RWPE1 (cell line): ENCODE measurements at regions of chr1 and their contacts with region 1.

Region 1: DNA sequence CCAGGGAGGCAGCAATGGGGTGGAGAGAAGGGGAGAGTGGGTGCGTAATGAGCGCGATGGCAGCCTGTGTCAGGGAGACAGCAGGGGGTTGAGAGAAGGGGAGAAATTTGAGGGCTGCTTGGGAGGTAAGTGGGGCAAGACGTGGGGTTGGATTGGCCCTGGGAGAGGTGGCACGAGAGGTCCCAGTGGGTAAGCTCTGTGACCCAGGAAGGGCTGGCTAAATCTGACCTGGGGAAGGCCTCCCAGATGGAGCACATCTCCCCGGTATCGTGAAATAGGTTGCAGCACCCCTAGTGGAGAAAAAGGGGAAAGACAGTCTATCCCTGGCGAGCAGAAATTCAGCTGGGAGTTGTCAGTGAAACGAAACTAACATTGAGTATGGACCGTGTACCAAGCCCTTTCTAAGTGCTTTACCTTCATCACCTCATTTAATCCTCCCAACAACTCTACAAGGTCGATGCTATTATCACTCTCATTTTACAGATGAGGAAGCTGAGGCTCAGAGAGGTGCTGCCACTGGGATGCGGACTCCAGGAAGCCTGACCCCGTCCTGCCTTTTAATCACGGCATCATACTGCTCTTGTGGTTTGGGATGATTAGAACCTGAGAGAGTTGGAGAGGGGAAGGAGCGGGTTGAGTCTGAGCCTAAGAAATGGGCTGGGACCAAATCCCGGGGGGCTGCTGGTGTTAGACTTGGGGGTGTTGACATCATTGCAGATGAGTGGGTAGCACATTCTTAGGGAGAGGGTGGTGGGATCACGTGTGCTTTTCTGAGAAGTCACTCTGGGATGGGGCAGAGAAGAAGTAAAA is 56.6 kb upstream of the RPL11 start:
- DNase-seq: peak; percentile 88
- H3K27ac ChIP-seq: peak overlapping the region; percentile 35
- CTCF ChIP-seq: peak; percentile 89

Region 2: DNA sequence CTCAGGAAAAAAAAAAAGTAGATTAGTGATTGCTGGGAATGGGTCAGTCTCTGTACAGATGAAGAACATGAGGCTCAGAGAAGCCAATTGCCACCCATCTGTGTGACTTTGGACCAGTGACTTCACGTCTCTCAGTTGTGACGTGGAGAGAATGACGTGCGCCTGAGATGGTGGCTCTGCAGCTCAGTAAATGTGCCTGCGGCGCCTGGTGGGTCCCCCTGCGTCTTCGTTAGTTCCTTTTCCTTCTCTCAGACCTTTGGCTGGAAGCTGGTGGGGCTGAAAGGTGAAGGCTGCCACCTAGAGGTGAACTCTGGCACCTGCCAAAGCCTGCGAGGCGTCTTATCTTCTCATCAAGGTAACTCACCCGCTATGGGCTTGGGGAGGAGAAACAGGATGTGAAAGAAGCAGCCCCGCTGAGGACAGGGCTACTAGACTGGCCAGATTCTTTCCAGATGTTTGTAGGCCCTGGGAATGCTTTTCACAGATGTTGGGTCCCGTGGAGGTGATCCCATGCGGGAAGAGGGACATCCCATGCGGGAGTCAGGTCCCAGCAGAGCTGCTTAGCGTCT is 95.3 kb before region 1 on chr1:
- CTCF ChIA-PET with region 1: interaction called, 97 read pairs
- POLR2A ChIA-PET with region 1: no interaction called
- DNase-seq: peak; percentile 89
- H3K27ac ChIP-seq: no peak overlapping the region
- CTCF ChIP-seq: peak; percentile 95

Region 3: GRCh38 chr1:23559136-23559984 is 75.7 kb before region 1 on chr1 and contains the start of gene ID3:
- CTCF ChIA-PET with region 1: interaction called, 31 read pairs
- POLR2A ChIA-PET with region 1: interaction called, 7 read pairs
- DNase-seq: peak; percentile 89
- H3K27ac ChIP-seq: peak within 1 kb of the TSS; percentile 96
- CTCF ChIP-seq: no peak

Region 4: GRCh38 chr1:23591460-23592208 is 43.4 kb before region 1 on chr1:
- CTCF ChIA-PET with region 1: interaction called, 13 read pairs
- POLR2A ChIA-PET with region 1: no interaction called
- DNase-seq: no peak
- H3K27ac ChIP-seq: peak overlapping the region; percentile 95
- CTCF ChIP-seq: no peak

Region 5: DNA sequence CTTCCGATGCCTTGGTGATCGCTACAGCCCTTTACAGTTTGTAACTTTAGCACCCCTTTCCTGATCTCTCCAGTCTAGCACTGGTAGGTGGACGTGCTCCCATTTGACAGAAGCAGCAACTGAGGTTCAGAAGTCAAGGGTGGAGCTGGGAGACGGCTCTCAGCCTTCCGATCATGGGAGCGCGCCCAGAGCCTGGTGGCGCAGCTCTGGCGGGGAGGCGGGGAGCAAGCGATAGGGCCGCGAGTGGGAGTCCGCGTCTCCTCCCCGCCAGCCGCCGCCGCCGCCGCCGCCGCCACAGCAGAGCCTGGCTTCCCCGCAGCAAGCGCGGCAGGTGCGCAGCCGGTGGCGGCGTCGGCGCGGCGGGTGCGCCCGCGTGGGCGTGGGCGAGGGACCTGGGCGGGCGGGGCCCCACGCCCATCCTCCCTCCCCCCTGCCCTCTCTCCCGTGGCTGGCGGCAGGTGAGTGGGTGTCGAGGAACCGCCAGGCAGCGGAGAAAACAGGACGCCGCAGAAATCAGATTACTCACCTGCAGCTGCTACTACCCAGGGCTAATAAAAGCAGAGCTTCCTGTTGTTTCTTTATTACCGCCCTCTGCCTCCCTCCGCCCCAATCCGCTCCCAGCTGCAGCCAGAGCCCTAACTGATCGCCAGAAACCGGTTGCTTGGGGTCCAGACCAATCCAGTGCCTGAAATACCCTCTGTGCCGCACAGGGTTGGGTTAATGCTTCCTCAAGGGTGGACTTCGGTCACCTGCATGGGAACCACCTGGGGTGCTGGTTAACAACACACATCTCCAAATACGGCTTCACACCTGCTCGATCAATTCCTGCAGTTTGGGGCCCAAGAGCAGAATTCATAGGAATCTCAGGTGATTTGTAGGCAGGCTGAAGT is 15.5 kb before region 1 on chr1:
- CTCF ChIA-PET with region 1: interaction called, 13 read pairs
- POLR2A ChIA-PET with region 1: no interaction called
- DNase-seq: peak; percentile 73
- H3K27ac ChIP-seq: peak overlapping the region; percentile 19; the same call in 1 of the 2 replicates
- CTCF ChIP-seq: no peak